Left lung (tissue), 14 donors: ENCODE measurements at regions of chr22 and their contacts with region 1.

Region 1: DNA sequence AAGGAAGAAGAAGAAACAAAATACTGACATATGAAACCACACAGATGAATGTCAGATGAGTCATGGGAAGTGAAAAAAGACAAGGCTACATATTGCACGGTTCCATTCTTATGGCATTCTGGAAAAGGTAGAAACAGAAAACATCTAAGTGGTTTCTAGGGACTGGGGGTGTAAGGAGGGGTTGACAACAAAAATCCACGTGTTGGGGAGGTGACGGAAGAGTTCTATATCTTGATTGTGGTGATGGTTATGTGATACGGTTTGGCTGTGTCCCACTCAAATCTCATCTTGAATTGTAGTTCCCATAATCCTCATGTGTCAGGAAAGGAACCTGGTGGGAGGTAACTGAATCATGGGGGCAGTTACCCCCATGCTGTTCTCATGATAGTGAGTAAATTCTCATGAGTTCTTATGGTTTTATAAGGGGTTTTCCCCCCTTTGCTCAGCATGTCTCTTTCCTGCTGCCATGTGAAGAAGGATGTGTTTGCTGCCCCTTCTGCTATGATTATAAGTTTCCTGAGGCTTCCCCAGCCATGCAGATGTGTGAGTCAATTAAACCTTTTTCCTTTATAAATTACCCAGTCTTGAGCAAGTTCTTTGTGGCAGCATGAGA is 6.4 kb upstream of the ARFGAP3 start:
- DNase-seq: no peak
- ATAC-seq: no peak
- H3K4me3 ChIP-seq: no peak overlapping the region
- H3K27ac ChIP-seq: peak overlapping the region in 1 of 2 donors; percentile 77
- H3K4me1 ChIP-seq: peaks cover 0 to 29% of the 10 kb centered on the region in 2 donors
- H3K27me3 ChIP-seq: no peaks in the 10 kb centered on the region
- CTCF ChIP-seq: no peak

Region 2: GRCh38 chr22:43036282-43036829 is 172.9 kb after region 1 on chr22:
- intact Hi-C with region 1: loop called in 1 of 2 experiments (anchors 10 kb)
- DNase-seq: peak in 1 of 4 donors; percentile 49
- ATAC-seq: peak; percentile 52
- H3K4me3 ChIP-seq: no peak overlapping the region
- H3K27ac ChIP-seq: no peak overlapping the region
- H3K4me1 ChIP-seq: peaks cover 0 to 9% of the 10 kb centered on the region in 2 donors
- H3K27me3 ChIP-seq: no peaks in the 10 kb centered on the region
- CTCF ChIP-seq: no peak